Activated T-helper 1 cell treated with anti-CD3 and anti-CD28 coated beads, Interleukin-12 subunit alpha, Interleukin-12 subunit beta, Interleukin-2, Interleukin-4 antibody, amounts not matched to agents 30 ng/mL and 10 ng/mL and 1 ng/mL, durations not matched to agents 14 hours and 24 hours and 36 hours (primary cell): ENCODE measurements at regions of chr14 and their contacts with region 1.

Region 1: GRCh38 chr14:81164167-81164774 is 56.5 kb downstream of the GTF2A1 start:
- DNase-seq: peak; percentile 50
- H3K4me3 Mint-ChIP-seq: no peak overlapping the region
- H3K27ac Mint-ChIP-seq: peak overlapping the region; percentile 1
- H3K4me1 Mint-ChIP-seq: peaks cover 35% of the 10 kb centered on the region
- H3K27me3 Mint-ChIP-seq: no peaks in the 10 kb centered on the region

Region 2: DNA sequence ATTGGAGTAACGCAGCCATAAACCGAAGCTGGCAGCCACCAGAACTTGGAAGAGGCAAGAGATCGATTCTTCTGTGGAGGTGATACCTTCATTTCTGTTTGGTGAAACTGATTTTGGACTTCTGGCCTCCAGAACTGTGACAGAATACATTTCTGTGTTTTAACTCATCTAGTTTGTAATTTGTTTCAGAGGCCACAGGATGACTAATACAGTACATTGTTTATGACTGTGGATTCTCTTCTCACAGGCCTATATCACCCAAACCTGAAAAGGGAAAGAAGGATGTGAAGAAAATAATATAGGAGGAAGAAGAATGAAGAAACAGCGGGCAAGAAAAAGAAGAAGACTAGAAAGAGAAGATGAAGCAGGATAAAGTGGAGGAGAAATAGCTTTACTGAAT is 689.2 kb before region 1 on chr14:
- intact Hi-C with region 1: no loop called
- DNase-seq: no peak
- H3K4me3 Mint-ChIP-seq: no peak overlapping the region
- H3K27ac Mint-ChIP-seq: no peak overlapping the region
- H3K4me1 Mint-ChIP-seq: no peaks in the 10 kb centered on the region
- H3K27me3 Mint-ChIP-seq: no peaks in the 10 kb centered on the region

Region 3: GRCh38 chr14:80587075-80587724 is 577.1 kb before region 1 on chr14:
- intact Hi-C with region 1: loop called (anchors 10 kb)
- DNase-seq: no peak
- H3K4me3 Mint-ChIP-seq: no peak overlapping the region
- H3K27ac Mint-ChIP-seq: peak overlapping the region; percentile 65
- H3K4me1 Mint-ChIP-seq: peaks cover 10% of the 10 kb centered on the region
- H3K27me3 Mint-ChIP-seq: peaks cover 3% of the 10 kb centered on the region

Region 4: DNA sequence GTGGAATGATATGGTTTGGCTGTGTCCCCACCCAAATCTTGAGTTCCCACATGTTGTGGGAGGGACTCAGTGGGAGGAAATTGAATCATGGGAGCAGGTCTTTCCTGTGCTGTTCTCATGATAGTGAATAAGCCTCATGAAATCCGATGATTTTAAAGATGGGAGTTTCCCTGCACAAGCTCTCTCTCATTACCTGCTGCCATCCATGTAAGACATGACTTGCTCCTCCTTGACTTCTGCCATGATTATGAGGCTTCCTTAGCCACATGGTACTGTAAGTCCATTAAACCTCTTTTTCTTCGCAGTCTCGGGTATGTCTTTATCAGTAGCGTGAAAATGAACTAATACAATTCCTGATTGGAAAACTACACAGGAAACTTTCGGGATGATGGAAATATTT is 108.3 kb before region 1 on chr14:
- intact Hi-C with region 1: loop called (anchors 5 kb)
- DNase-seq: no peak
- H3K4me3 Mint-ChIP-seq: no peak overlapping the region
- H3K27ac Mint-ChIP-seq: no peak overlapping the region
- H3K4me1 Mint-ChIP-seq: no peaks in the 10 kb centered on the region
- H3K27me3 Mint-ChIP-seq: peaks cover 3% of the 10 kb centered on the region

Region 5: GRCh38 chr14:81137316-81137715 is 27.0 kb before region 1 on chr14:
- intact Hi-C with region 1: no loop called
- DNase-seq: no peak
- H3K4me3 Mint-ChIP-seq: no peak overlapping the region
- H3K27ac Mint-ChIP-seq: no peak overlapping the region
- H3K4me1 Mint-ChIP-seq: no peaks in the 10 kb centered on the region
- H3K27me3 Mint-ChIP-seq: no peaks in the 10 kb centered on the region

Region 6: GRCh38 chr14:81153187-81153586 is 11.1 kb before region 1 on chr14:
- intact Hi-C with region 1: loop called (anchors 1 kb)
- DNase-seq: no peak
- H3K4me3 Mint-ChIP-seq: no peak overlapping the region
- H3K27ac Mint-ChIP-seq: peak overlapping the region; percentile 4
- H3K4me1 Mint-ChIP-seq: peaks cover 17% of the 10 kb centered on the region
- H3K27me3 Mint-ChIP-seq: peaks cover 2% of the 10 kb centered on the region